CD4-positive, alpha-beta T cell (primary cell): ENCODE measurements at regions of chr13 and their contacts with region 1.

Region 1: GRCh38 chr13:58852076-58852475 is 1220.5 kb downstream of the PCDH17 start:
- DNase-seq: no peak
- ATAC-seq: no peak
- H3K4me3 ChIP-seq: no peak overlapping the region
- H3K4me3 Mint-ChIP-seq: no peak overlapping the region
- H3K27ac ChIP-seq: no peak overlapping the region
- H3K27ac Mint-ChIP-seq: no peak overlapping the region
- H3K4me1 ChIP-seq: no peaks in the 10 kb centered on the region
- H3K4me1 Mint-ChIP-seq: no peaks in the 10 kb centered on the region
- H3K27me3 ChIP-seq: no peaks in the 10 kb centered on the region
- H3K27me3 Mint-ChIP-seq: no peaks in the 10 kb centered on the region
- CTCF ChIP-seq: no peak

Region 2: DNA sequence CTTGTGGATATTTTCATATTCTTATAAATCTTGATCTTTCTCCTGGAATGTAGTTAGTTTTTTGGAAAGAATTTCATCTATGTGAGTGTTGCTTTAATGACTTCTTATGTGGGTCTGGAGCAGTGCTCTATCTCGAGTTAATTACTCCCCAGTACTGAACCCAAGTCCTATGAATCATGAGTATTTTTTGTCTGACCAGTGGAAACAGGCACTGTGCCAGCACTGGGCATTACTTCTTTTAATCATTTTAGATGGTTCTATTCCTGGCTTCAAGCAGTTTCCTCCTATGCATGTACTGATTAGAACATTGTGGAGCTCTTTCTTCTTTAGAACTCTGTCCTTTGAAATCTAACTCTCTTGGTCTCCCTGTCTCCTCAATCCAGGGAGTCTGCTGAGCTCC is 754.2 kb before region 1 on chr13:
- CTCF ChIA-PET with region 1: no interaction called
- POLR2A ChIA-PET with region 1: no interaction called
- intact Hi-C with region 1: loop called in 1 of 2 experiments (anchors 5 kb)
- DNase-seq: no peak
- ATAC-seq: no peak
- H3K4me3 ChIP-seq: no peak overlapping the region
- H3K4me3 Mint-ChIP-seq: no peak overlapping the region
- H3K27ac ChIP-seq: no peak overlapping the region
- H3K27ac Mint-ChIP-seq: no peak overlapping the region
- H3K4me1 ChIP-seq: no peaks in the 10 kb centered on the region
- H3K4me1 Mint-ChIP-seq: no peaks in the 10 kb centered on the region
- H3K27me3 ChIP-seq: no peaks in the 10 kb centered on the region
- H3K27me3 Mint-ChIP-seq: no peaks in the 10 kb centered on the region
- CTCF ChIP-seq: no peak